Tibial artery (tissue), 4 donors: ENCODE measurements at regions of chr15 and their contacts with region 1.

Region 1: DNA sequence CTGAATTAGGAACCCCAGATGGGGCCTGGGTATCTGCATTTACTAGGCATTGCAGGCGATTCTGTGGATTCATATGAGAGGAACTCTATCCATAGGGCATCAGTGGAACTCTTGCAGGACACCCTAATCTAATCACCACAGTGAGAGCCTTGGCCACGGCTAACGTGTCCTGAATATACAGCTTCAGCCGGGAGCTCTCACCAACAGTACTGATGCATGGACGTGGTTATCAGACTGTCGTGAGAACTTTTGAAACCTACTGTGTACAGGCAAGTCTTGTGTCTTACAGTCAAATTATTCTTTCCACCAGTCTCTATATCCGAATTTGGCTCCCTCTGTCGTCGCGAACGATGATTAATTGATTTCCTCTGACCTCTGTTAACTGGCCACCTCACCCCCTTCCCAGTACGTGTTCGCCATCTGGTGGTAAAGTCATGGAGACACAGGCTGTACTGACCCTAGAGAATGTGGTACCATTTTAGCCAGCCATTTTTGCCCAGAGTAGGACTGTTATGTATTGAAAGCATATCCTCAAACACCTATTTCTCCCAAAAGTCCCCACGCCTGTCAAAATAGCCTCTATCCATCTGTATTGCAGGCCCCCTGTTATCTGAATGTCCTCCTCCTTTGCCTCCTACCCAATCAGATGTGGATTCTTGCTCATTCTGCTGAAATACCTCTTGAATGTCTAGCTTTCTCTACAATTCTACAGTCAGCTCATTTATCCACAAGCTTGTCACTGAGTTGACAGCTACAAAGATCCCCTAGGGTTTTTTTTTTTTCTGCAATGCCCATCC is 39.7 kb downstream of the GLDN start:
- DNase-seq: peak; percentile 72 to 80
- H3K4me3 ChIP-seq: no peak overlapping the region
- H3K27ac ChIP-seq: no peak overlapping the region
- H3K4me1 ChIP-seq: peaks cover 0 to 27% (median 22%) of the 10 kb centered on the region in 4 donors
- H3K27me3 ChIP-seq: no peaks in the 10 kb centered on the region
- CTCF ChIP-seq: peak; percentile 92 to 99

Region 2: GRCh38 chr15:51162865-51163762 is 218.1 kb before region 1 on chr15:
- intact Hi-C with region 1: loop called (anchors 2 kb)
- DNase-seq: peak; percentile 69 to 81
- H3K4me3 ChIP-seq: peak overlapping the region; percentile 7 to 25
- H3K27ac ChIP-seq: peak overlapping the region; percentile 81 to 83
- H3K4me1 ChIP-seq: peaks cover 7 to 11% (median 9%) of the 10 kb centered on the region in 4 donors
- H3K27me3 ChIP-seq: no peaks in the 10 kb centered on the region
- CTCF ChIP-seq: peak; percentile 92 to 97

Region 3: GRCh38 chr15:51192521-51193280 is 188.5 kb before region 1 on chr15:
- intact Hi-C with region 1: loop called (anchors 1 kb)
- DNase-seq: peak; percentile 95
- H3K4me3 ChIP-seq: no peak overlapping the region
- H3K27ac ChIP-seq: peak overlapping the region; percentile 83
- H3K4me1 ChIP-seq: peaks cover 0 to 73% (median 51%) of the 10 kb centered on the region in 4 donors
- H3K27me3 ChIP-seq: no peaks in the 10 kb centered on the region
- CTCF ChIP-seq: peak; percentile 92 to 96

Region 4: GRCh38 chr15:51281368-51281967 is 99.7 kb before region 1 on chr15:
- intact Hi-C with region 1: loop called (anchors 2 kb)
- DNase-seq: peak; percentile 55 to 86
- H3K4me3 ChIP-seq: no peak overlapping the region
- H3K27ac ChIP-seq: peak overlapping the region; percentile 7 to 9
- H3K4me1 ChIP-seq: peaks cover 0 to 20% (median 7%) of the 10 kb centered on the region in 4 donors
- H3K27me3 ChIP-seq: no peaks in the 10 kb centered on the region
- CTCF ChIP-seq: peak; percentile 78 to 79